ENCODE measurements at regions of chr13 and their contacts with region 1.

Region 1: DNA sequence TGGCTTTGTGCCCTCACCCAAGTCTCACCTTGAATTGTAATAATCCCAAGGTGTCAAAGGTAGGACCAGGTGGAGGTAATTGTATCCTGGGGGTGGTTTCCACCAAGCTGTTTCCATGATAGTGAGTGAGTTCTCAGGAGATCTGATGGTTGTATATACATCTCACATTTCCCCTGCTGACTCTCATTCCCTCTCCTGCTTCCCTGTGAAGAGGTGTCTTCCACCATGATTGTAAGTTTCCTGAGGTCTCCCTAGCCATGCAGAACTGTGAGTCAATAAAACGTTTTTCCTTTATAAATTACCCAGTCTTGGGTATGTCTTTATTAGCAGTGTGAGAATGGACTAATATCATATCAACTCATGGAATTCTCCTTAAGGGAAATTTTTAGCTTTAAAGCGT is 302.6 kb downstream of the LIG4 start:
- DNase-seq: peak in 1 of 4 experiments; percentile 77
- ATAC-seq: peak; percentile 70
- H3K4me3 ChIP-seq: peak overlapping the region; percentile 39
- H3K27ac ChIP-seq: peak overlapping the region; percentile 60; the same call in 2 of the 3 replicates
- H3K4me1 ChIP-seq: peaks cover 3 to 36% of the 10 kb centered on the region in 2 experiments
- H3K27me3 ChIP-seq: no peaks in the 10 kb centered on the region
- CTCF ChIP-seq: no peak
- EP300 ChIP-seq: no peak
- POLR2A ChIP-seq: no peak
- RAD21 ChIP-seq: no peak

Region 2: GRCh38 chr13:107867701-107868661 is 44.8 kb before region 1 on chr13:
- CTCF ChIA-PET with region 1: no interaction called
- POLR2A ChIA-PET with region 1: interaction called, 6 read pairs
- in situ Hi-C with region 1: no loop called
- intact Hi-C with region 1: loop called (anchors 5 kb)
- DNase-seq: peak; percentile 73 to 85 (median 78)
- ATAC-seq: peak; percentile 75
- H3K4me3 ChIP-seq: peak overlapping the region; percentile 48
- H3K27ac ChIP-seq: no peak overlapping the region; the same call in 2 of the 3 replicates
- H3K4me1 ChIP-seq: peaks cover 22 to 31% of the 10 kb centered on the region in 2 experiments; a peak in 4 of 5 replicates
- H3K27me3 ChIP-seq: peaks cover 18 to 28% of the 10 kb centered on the region in 2 experiments
- CTCF ChIP-seq: no peak
- EP300 ChIP-seq: no peak
- POLR2A ChIP-seq: no peak
- RAD21 ChIP-seq: no peak

Region 3: GRCh38 chr13:107900775-107901174 is 12.0 kb before region 1 on chr13:
- CTCF ChIA-PET with region 1: no interaction called
- POLR2A ChIA-PET with region 1: interaction called, 61 read pairs
- in situ Hi-C with region 1: no loop called
- intact Hi-C with region 1: no loop called
- DNase-seq: peak in 3 of 4 experiments; percentile 53 to 73 (median 55)
- ATAC-seq: peak; percentile 49
- H3K4me3 ChIP-seq: no peak overlapping the region
- H3K27ac ChIP-seq: peak overlapping the region; percentile 19; the same call in 1 of the 3 replicates
- H3K4me1 ChIP-seq: peaks cover 0 to 26% of the 10 kb centered on the region in 2 experiments; a peak in 3 of 5 replicates
- H3K27me3 ChIP-seq: no peaks in the 10 kb centered on the region
- CTCF ChIP-seq: no peak
- EP300 ChIP-seq: no peak
- POLR2A ChIP-seq: no peak
- RAD21 ChIP-seq: no peak